ENCODE measurements at regions of chr5 and their contacts with region 1.

Region 1: DNA sequence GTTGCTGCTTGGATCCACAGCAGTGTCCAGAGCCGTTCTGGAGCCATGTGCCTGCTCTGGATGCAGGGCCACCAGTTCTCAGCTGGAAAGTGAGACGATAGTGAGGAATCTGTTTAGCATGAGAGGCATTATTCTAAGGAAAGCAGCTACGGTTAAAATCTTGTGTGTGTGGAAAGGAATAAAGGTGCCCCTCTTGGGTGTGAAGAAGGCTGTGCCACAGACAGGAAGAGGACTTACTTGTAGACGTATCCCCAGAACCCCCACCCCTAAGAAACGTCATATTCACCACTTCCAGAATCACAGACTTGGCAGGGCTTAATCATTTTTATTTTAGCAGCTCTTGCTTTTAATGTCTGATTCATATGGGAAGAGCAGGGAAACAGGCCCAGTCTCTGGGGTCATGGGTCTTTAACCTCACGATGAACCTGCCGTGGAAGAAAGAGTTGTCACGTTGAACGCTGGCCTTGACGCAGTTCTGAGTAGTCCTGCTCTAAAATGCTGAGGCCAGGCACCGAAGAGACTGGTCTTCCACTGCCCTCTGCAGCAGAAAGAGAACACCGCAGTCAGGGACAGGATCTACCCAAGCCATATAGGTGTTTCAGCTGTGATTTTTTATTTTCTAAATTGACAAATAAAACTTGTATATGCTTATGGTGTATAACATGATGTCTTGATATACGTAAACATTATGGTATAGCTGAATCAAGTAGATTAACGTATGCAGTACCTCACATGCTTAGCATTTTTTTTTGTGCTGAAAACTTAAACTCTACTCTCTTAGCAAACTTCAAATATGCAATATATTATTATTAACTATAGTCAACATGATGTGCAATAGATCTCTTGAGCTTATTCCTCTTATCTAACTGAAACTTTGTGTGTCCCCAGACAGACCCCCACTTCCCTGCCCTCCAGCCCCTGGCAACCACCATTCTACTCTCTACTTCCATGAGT is 38.8 kb downstream of the CARTPT start:
- DNase-seq: no peak
- ATAC-seq: peak; percentile 97

Region 2: GRCh38 chr5:71471193-71471592 is 286.7 kb before region 1 on chr5:
- intact Hi-C with region 1: loop called (anchors 5 kb)
- DNase-seq: no peak
- ATAC-seq: no peak

Region 3: DNA sequence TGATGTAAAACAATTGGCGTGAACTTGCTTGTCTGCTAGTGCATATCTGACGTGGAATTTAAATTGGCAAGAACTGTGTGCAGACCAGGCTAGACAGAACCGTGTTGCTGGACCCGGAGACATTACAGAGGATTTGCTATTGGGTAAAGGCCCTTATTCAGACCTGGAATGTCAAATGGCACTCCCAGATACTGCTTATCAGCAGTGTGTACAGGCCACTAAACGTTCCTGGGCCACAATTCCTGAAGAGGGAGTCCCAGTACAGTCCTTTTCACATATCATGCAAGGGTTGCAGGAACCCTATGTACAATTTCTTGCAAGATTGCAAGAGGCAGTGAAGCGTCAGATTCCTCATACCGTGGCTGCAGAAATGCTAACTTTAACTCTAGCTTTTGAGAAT is 184.3 kb before region 1 on chr5:
- intact Hi-C with region 1: loop called (anchors 2 kb)
- DNase-seq: no peak
- ATAC-seq: peak; percentile 64

Region 4: GRCh38 chr5:71938895-71939294 is 181.0 kb after region 1 on chr5:
- intact Hi-C with region 1: no loop called
- DNase-seq: no peak
- ATAC-seq: no peak